ENCODE measurements at regions of chr1 and their contacts with region 1.

Region 1: DNA sequence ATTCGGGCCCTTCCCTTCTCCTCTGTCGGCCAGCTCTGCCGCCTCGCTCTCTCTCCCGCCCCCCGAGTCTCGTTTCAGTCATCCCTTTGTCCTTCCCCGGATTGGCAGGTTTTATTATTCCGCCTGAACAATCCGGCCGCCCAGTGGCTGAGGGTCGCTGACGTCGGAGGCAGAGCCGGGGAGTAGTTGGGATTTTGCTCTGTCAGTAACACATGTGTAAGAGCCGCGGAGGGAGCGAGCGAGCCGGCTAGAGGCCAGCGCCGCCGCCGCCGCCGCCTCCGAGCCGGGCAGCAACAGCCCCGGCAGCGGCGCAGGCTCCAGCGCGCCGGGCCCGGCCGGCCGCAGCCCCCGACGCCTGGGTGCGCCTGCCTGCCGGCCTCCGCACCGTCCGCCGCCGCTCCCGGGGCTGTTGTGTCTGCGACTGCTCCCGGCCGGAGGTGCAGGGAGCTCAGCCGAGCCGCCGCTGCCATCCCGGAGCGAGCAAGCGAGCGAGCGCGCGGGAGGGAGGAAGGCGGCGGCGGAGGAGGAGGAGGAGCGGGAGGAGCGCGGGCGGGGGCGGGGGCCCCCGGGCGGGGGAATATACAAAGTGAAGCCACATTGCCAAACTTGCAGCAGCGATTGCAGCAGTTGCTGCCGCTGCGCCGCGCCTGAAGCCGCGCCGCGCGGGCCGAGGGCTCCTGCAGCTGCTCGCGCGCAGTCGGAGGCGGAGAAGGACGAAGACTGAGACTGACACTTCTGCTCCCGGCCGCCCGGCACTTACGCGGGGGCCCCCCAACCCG is at the start of gene LMO4:
- DNase-seq: peak; percentile 93
- H3K4me3 Mint-ChIP-seq: peak within 1 kb of the TSS; percentile 89
- H3K27ac Mint-ChIP-seq: peak within 1 kb of the TSS; percentile 85
- H3K4me1 Mint-ChIP-seq: peaks cover 33% of the 10 kb centered on the region
- H3K27me3 Mint-ChIP-seq: peaks cover 8% of the 10 kb centered on the region
- total RNA-seq, gene LMO4: 23.0 to 24.1 TPM

Region 2: GRCh38 chr1:85707990-85708828 is 1620.3 kb before region 1 on chr1 and contains the start of gene ZNHIT6:
- CTCF ChIA-PET with region 1: no interaction called
- POLR2A ChIA-PET with region 1: no interaction called
- intact Hi-C with region 1: loop called (anchors 5 kb)
- DNase-seq: peak; percentile 93
- H3K4me3 Mint-ChIP-seq: no peak within 1 kb of the TSS
- H3K27ac Mint-ChIP-seq: no peak within 1 kb of the TSS
- H3K4me1 Mint-ChIP-seq: peaks cover 23% of the 10 kb centered on the region
- H3K27me3 Mint-ChIP-seq: no peaks in the 10 kb centered on the region
- total RNA-seq, gene ZNHIT6: 18.7 TPM

Region 3: GRCh38 chr1:87151500-87152421 is 176.7 kb before region 1 on chr1:
- CTCF ChIA-PET with region 1: no interaction called
- POLR2A ChIA-PET with region 1: no interaction called
- intact Hi-C with region 1: loop called (anchors 5 kb)
- DNase-seq: peak; percentile 54
- H3K4me3 Mint-ChIP-seq: peak overlapping the region; percentile 54
- H3K27ac Mint-ChIP-seq: no peak overlapping the region
- H3K4me1 Mint-ChIP-seq: peaks cover 16% of the 10 kb centered on the region
- H3K27me3 Mint-ChIP-seq: peaks cover 54% of the 10 kb centered on the region

Region 4: GRCh38 chr1:87449348-87449963 is 121.0 kb after region 1 on chr1:
- CTCF ChIA-PET with region 1: interaction called, 6 read pairs
- POLR2A ChIA-PET with region 1: interaction called, 3 read pairs
- intact Hi-C with region 1: loop called (anchors 1 kb)
- DNase-seq: peak; percentile 80
- H3K4me3 Mint-ChIP-seq: peak overlapping the region; percentile 34
- H3K27ac Mint-ChIP-seq: peak overlapping the region; percentile 78
- H3K4me1 Mint-ChIP-seq: peaks cover 33% of the 10 kb centered on the region
- H3K27me3 Mint-ChIP-seq: no peaks in the 10 kb centered on the region

Region 5: GRCh38 chr1:88061492-88062177 is 733.2 kb after region 1 on chr1:
- CTCF ChIA-PET with region 1: no interaction called
- POLR2A ChIA-PET with region 1: no interaction called
- intact Hi-C with region 1: loop called (anchors 1 kb)
- DNase-seq: peak; percentile 15
- H3K4me3 Mint-ChIP-seq: no peak overlapping the region
- H3K27ac Mint-ChIP-seq: no peak overlapping the region
- H3K4me1 Mint-ChIP-seq: no peaks in the 10 kb centered on the region
- H3K27me3 Mint-ChIP-seq: peaks cover 8% of the 10 kb centered on the region

Measured in activated CD4-positive, alpha-beta memory T cell treated with anti-CD3 and anti-CD28 coated beads for 36 hours (primary cell).